Activated B cell treated with CpG ODN at 0.5 μM for 24 hours (primary cell): ENCODE measurements at regions of chr17 and their contacts with region 1.

Region 1: DNA sequence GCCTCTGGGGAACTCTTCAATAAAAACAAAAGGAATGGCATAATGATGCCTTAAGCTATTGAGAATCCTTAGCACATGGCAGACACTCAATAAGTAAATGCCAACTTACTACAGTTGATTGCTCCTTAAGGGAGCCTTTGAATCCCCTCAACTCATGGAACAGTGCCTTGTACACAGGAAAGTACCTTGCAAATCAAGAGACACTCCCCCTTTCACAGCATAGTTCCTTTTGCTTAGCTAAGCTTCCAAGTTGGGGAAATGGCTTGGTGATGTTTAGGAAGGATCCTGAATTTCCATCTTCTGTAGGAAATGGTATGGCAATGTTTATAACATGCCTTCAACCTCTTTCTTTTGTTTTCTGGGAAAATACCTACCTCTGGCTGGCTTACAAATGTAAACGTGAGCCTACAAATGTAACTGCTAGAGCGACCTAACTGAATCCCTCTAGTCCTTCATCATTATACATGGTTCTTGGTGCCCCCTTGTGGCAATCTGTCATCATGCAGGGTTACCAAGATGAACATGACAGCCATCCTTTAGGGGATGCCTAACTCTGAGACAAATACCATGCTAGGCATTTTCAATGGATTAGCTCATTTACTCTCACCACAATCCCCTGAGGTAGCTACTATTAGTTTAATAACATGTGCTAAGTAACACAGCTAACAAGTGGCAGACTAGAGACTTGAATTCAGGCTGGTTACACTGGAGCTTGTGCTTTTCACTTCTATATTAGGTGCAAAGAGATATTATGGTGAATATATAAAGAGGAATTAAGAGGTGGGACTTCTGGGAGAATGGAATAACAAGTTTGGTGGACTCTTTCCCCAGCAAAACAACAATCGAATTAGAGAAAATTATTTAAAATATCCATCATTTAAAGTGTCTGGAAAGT is 65.0 kb downstream of the MMD start:
- DNase-seq: no peak
- ATAC-seq: peak; percentile 91
- H3K4me3 Mint-ChIP-seq: no peak overlapping the region
- H3K27ac Mint-ChIP-seq: no peak overlapping the region
- H3K4me1 Mint-ChIP-seq: peaks cover 2% of the 10 kb centered on the region
- H3K27me3 Mint-ChIP-seq: peaks cover 17% of the 10 kb centered on the region
- CTCF ChIP-seq: no peak

Region 2: DNA sequence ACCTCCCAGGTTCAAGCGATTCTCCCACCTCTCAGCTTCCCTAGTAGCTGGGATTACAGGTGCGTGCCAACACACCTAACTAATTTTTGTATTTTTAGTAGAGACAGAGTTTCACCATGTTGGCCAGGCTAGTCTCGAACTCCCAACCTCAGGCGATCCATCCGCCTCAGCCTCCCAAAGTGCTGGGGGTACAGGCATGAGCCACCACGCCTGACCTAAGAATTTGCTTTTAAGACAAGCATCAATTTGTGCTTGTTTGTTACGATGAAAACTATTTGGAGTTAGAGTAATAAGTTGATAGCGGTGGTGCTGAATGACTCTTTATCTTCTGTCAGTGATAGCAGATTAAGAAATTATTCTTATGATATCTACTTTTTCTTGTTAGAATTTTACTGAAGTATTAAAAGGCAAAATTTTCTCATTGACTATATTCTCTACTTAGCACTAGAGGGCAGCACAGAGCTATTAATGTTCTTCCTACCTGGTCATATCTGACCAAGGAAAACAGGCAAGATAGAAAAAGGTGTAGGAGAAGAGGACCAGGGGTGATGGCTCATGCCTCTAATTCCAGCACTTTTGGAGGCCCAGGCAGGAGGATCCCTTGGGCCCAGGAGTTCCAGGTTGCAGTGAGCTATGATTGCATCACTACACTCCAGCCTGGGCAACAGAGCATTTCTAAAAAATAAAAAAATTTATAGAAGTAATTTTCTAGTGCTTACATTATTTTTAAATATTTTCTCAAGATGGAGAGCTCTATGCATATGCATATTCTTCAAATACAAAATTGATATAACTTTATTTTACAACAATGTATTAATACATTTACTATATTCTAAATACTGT is 363.7 kb before region 1 on chr17:
- CTCF ChIA-PET with region 1: interaction called, 61 read pairs
- POLR2A ChIA-PET with region 1: no interaction called
- intact Hi-C with region 1: loop called (anchors 1 kb)
- DNase-seq: no peak
- ATAC-seq: peak; percentile 50
- H3K4me3 Mint-ChIP-seq: no peak overlapping the region
- H3K27ac Mint-ChIP-seq: no peak overlapping the region
- H3K4me1 Mint-ChIP-seq: no peaks in the 10 kb centered on the region
- H3K27me3 Mint-ChIP-seq: no peaks in the 10 kb centered on the region
- CTCF ChIP-seq: no peak

Region 3: DNA sequence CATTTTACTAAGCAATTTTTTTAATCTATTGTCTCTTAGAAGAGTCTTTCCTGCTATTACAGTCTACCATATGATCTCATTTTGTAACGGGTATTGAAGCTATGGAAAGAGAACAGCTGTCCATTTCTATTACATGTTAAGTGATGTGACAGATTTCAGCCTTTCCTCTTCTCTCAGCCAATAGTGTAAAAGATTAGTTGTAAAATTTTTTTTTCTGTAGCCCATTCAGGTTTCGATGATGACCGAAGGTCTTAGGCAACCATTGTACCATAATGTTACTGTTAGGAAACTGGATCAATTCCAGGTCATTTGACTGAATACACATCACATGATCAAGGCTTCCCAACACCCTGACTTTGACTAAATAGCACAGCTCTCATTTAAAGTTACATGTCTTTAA is 239.5 kb before region 1 on chr17:
- CTCF ChIA-PET with region 1: no interaction called
- POLR2A ChIA-PET with region 1: no interaction called
- intact Hi-C with region 1: no loop called
- DNase-seq: no peak
- ATAC-seq: no peak
- H3K4me3 Mint-ChIP-seq: no peak overlapping the region
- H3K27ac Mint-ChIP-seq: no peak overlapping the region
- H3K4me1 Mint-ChIP-seq: no peaks in the 10 kb centered on the region
- H3K27me3 Mint-ChIP-seq: no peaks in the 10 kb centered on the region
- CTCF ChIP-seq: no peak

Region 4: DNA sequence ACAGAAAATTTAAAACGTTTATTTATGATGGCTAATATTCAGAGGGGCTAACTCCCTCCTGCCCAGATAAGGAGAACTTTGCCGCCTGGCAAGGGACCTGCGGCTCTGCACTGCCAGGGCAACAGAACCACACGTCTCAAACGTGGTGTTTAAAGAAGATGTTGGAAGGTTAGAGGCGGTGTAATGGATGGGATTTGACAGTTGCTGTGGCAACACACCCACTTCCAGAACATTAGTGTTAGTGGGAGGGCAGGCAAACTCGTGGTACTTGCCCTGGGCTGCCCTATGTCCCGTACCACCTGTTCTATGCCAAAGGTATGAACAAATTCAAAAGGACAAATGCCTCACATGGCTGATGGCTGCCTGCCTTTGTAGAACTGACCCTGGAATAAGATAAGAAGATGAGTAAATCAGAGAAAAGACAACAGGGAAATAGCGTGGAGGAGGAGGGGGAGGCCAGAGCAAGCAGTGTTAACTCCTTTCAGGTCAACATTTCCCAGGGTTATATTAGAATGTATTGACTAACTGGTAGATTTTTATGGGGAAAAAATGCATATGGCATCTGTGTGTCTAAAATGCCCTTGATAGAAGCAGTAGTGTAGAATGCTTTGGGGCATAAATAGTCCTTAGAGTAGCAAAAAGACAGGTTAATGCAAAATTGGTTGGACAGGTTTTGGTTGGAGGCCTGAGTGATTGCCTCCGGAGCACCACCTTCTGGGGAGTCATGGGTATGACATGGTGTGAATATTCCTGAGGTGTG is 61.1 kb before region 1 on chr17:
- CTCF ChIA-PET with region 1: no interaction called
- POLR2A ChIA-PET with region 1: no interaction called
- intact Hi-C with region 1: loop called (anchors 2 kb)
- DNase-seq: peak; percentile 31
- ATAC-seq: peak; percentile 79
- H3K4me3 Mint-ChIP-seq: no peak overlapping the region
- H3K27ac Mint-ChIP-seq: no peak overlapping the region
- H3K4me1 Mint-ChIP-seq: peaks cover 22% of the 10 kb centered on the region
- H3K27me3 Mint-ChIP-seq: peaks cover 4% of the 10 kb centered on the region
- CTCF ChIP-seq: no peak

Region 5: DNA sequence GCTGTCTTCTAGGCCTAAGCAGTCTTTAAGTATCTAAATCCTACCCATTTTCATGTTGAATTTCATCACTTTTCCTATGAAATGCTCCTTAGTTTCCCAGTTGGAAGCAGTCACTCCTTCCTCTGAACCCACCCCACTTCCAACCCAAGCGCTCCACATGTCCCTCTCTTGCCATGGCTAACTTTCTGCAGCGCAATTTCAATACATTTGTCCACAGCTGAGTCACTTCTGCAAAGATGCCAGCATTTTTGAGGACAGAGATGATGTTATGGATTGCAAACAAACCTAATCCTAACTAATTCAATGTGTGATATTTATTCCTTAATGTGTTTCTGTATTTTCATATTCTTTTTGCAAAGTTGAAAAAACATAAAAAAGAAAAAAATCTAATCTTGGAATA is 20.3 kb before region 1 on chr17:
- CTCF ChIA-PET with region 1: no interaction called
- POLR2A ChIA-PET with region 1: no interaction called
- intact Hi-C with region 1: loop called (anchors 2 kb)
- DNase-seq: no peak
- ATAC-seq: no peak
- H3K4me3 Mint-ChIP-seq: no peak overlapping the region
- H3K27ac Mint-ChIP-seq: no peak overlapping the region
- H3K4me1 Mint-ChIP-seq: no peaks in the 10 kb centered on the region
- H3K27me3 Mint-ChIP-seq: peaks cover 14% of the 10 kb centered on the region
- CTCF ChIP-seq: no peak